Right cardiac atrium (tissue), 5 donors: ENCODE measurements at regions of chr12 and their contacts with region 1.

Region 1: DNA sequence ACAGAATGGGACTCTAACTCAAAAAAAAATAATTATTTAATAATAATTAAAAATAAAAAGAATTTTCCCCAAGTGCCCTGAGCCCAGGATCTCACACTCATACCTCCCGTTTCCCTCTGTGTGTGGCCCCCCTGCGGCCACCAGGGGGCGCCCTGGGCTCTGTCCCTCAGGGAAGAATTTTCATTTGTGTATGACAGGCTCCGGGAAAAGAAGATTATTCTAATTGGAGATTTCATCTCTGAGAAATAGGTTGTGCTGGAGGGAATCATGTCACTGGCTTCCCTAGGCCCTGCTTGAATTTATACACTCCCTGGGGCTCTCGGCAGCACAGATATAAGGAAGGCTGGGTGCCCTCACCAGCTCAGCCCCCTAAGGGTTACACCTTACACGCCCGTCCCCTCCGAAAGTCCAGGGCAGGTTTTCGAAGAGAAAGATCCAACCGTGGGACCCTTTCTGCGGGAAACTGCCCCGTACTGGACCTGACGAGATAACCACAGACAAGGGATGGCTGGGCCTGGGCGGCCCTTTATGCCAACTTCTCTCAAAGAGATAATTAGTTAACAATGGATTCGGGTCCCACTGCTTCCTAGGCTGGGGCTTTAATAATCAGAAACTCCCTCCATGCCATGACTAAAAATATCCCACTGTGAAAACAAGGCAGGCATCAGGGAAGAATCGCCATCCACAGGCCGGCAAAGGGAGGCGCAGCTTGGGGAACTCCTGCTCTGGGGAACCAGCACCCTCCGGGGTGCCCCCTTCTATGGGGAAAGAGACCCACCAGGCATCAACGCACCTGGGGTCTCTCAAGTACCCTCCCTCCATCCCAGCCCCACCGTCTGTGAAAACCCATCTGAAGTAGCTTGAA is 80.7 kb downstream of the KDM2B start:
- DNase-seq: peak; percentile 80 to 93 (median 93)
- ATAC-seq: peak; percentile 84 to 85
- H3K4me3 ChIP-seq: peak overlapping the region; percentile 19
- H3K27ac ChIP-seq: peak overlapping the region; percentile 88
- H3K4me1 ChIP-seq: no peaks in the 10 kb centered on the region
- H3K27me3 ChIP-seq: no peaks in the 10 kb centered on the region

Region 2: DNA sequence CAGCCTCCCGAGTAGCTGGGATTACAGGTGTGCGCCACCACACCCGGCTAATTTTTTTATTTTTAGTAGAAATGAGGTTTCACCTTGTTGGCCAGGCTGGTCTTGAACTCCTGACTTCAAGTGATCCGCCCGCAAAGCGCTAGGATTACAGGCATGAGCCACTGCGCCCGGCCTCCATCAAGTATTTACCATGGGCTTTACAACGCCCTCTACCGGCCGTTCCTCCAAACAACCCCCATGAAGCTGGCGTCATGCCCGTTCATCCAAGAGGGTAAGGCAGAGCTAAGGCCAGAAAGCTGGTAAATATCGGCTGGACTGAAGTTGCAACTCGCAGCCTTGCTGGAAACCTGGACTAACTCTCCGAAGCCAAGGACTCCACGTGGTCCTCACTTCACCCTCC is 58.6 kb before region 1 on chr12:
- intact Hi-C with region 1: no loop called
- DNase-seq: no peak
- ATAC-seq: no peak
- H3K4me3 ChIP-seq: no peak overlapping the region
- H3K27ac ChIP-seq: no peak overlapping the region
- H3K4me1 ChIP-seq: no peaks in the 10 kb centered on the region
- H3K27me3 ChIP-seq: no peaks in the 10 kb centered on the region

Region 3: GRCh38 chr12:121452340-121452984 is 47.7 kb before region 1 on chr12:
- intact Hi-C with region 1: no loop called
- DNase-seq: peak in 1 of 3 donors; percentile 68
- ATAC-seq: peak; percentile 16 to 30
- H3K4me3 ChIP-seq: no peak overlapping the region
- H3K27ac ChIP-seq: no peak overlapping the region
- H3K4me1 ChIP-seq: no peaks in the 10 kb centered on the region
- H3K27me3 ChIP-seq: no peaks in the 10 kb centered on the region

Region 4: GRCh38 chr12:121590476-121591143 is 90.4 kb after region 1 on chr12:
- intact Hi-C with region 1: no loop called
- DNase-seq: no peak
- ATAC-seq: peak in 1 of 2 donors; percentile 35
- H3K4me3 ChIP-seq: peak overlapping the region; percentile 48
- H3K27ac ChIP-seq: peak overlapping the region; percentile 80
- H3K4me1 ChIP-seq: no peaks in the 10 kb centered on the region
- H3K27me3 ChIP-seq: no peaks in the 10 kb centered on the region

Region 5: DNA sequence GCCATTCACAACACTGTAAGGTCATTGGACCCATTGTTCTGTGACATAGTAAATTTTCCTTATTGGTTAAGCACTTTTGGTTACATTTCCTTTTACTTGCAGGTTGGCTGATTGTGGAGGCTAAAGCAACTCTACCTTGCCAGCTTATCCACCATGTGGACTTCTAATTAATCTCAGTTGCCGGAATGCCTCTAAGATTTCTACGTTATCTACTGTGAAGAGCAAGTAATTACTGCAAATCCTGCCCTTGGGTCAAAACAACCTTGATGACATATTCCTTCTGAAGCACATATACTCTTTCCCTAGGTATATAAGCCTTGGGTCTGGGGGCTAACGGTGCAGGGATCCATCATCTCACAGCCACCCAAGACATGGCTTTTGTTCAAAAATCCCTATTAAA is 188.8 kb after region 1 on chr12:
- intact Hi-C with region 1: loop called in 2 of 4 experiments (anchors 5 to 10 kb)
- DNase-seq: no peak
- ATAC-seq: no peak
- H3K4me3 ChIP-seq: no peak overlapping the region
- H3K27ac ChIP-seq: no peak overlapping the region
- H3K4me1 ChIP-seq: no peaks in the 10 kb centered on the region
- H3K27me3 ChIP-seq: no peaks in the 10 kb centered on the region